Transverse colon (tissue), 4 donors: ENCODE measurements at regions of chr13 and their contacts with region 1.

Region 1: DNA sequence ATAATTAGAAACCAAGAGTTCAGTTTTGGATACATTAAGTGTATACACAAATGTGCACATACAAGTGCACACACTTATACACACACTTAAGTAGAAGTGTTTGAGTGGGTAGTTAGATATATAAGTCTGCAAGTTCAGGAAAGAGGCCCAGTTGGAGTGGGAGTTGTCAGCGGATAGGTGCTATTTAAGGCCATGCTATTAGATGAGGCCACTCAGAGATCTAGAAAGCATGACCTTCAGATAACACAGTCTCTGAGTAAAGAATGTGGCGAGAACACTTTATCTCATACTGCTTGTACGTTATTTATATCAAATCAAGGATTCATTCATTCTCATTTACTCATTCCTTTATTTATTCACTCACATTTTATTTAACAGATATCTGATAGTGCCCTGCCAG is 206.2 kb downstream of the POSTN start:
- DNase-seq: no peak
- H3K4me3 ChIP-seq: no peak overlapping the region
- H3K27ac ChIP-seq: no peak overlapping the region
- H3K4me1 ChIP-seq: no peaks in the 10 kb centered on the region
- H3K27me3 ChIP-seq: no peaks in the 10 kb centered on the region
- CTCF ChIP-seq: no peak
- EP300 ChIP-seq: no peak
- POLR2A ChIP-seq: no peak

Region 2: DNA sequence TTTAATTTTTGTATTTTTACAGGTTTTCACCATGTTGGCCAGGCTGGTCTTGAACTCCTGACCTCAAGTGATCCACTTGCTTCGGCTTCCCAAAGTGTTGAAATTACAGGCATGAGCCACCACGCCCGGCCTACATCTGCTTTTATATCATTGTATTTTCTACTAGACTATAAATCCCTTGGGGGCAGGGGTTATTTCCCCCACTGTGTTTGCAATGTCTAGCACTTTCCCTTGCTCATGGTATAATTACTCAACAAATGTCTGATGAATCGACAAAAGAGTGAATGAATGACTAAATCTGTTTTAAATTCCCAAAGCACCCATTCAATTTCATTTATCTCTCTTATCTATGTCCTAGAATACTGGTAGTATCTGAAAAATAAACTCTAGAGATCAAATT is 42.5 kb before region 1 on chr13:
- in situ Hi-C with region 1: no loop called
- intact Hi-C with region 1: no loop called
- DNase-seq: no peak
- H3K4me3 ChIP-seq: no peak overlapping the region
- H3K27ac ChIP-seq: no peak overlapping the region
- H3K4me1 ChIP-seq: no peaks in the 10 kb centered on the region
- H3K27me3 ChIP-seq: no peaks in the 10 kb centered on the region
- CTCF ChIP-seq: no peak
- EP300 ChIP-seq: no peak
- POLR2A ChIP-seq: no peak

Region 3: GRCh38 chr13:37806666-37807065 is 414.3 kb after region 1 on chr13:
- in situ Hi-C with region 1: no loop called
- intact Hi-C with region 1: no loop called
- DNase-seq: no peak
- H3K4me3 ChIP-seq: no peak overlapping the region
- H3K27ac ChIP-seq: no peak overlapping the region
- H3K4me1 ChIP-seq: no peaks in the 10 kb centered on the region
- H3K27me3 ChIP-seq: no peaks in the 10 kb centered on the region
- CTCF ChIP-seq: no peak
- EP300 ChIP-seq: no peak
- POLR2A ChIP-seq: no peak

Region 4: GRCh38 chr13:38173403-38173802 is 781.0 kb after region 1 on chr13:
- in situ Hi-C with region 1: no loop called
- intact Hi-C with region 1: loop called (anchors 5 kb)
- DNase-seq: no peak
- H3K4me3 ChIP-seq: no peak overlapping the region
- H3K27ac ChIP-seq: no peak overlapping the region
- H3K4me1 ChIP-seq: no peaks in the 10 kb centered on the region
- H3K27me3 ChIP-seq: no peaks in the 10 kb centered on the region
- CTCF ChIP-seq: no peak
- EP300 ChIP-seq: no peak
- POLR2A ChIP-seq: no peak